ENCODE measurements at regions of chr1 and their contacts with region 1.

Region 1: GRCh38 chr1:16366722-16367257 is at the start of gene SZRD1:
- DNase-seq: peak; percentile 98
- H3K4me3 ChIP-seq: peak within 1 kb of the TSS; percentile 84 to 88
- H3K27ac ChIP-seq: peak within 1 kb of the TSS; percentile 95
- H3K4me1 ChIP-seq: peaks cover 0 to 72% (median 47%) of the 10 kb centered on the region in 4 donors
- H3K27me3 ChIP-seq: no peaks in the 10 kb centered on the region
- CTCF ChIP-seq: no peak

Region 2: GRCh38 chr1:16206547-16207317 is 160.1 kb before region 1 on chr1:
- intact Hi-C with region 1: loop called (anchors 10 kb)
- DNase-seq: peak; percentile 97 to 99
- H3K4me3 ChIP-seq: peak overlapping the region; percentile 53 to 68
- H3K27ac ChIP-seq: peak overlapping the region; percentile 68 to 83
- H3K4me1 ChIP-seq: peaks cover 0 to 41% (median 11%) of the 10 kb centered on the region in 4 donors
- H3K27me3 ChIP-seq: no peaks in the 10 kb centered on the region
- CTCF ChIP-seq: no peak

Measured in tibial artery (tissue), 4 donors.